ENCODE measurements at regions of chr14 and their contacts with region 1.

Region 1: GRCh38 chr14:59576332-59577294 is at the start of gene CCDC175:
- DNase-seq: peak; percentile 60 to 95 (median 87)
- ATAC-seq: peak; percentile 100
- H3K4me3 ChIP-seq: peak within 1 kb of the TSS; percentile 24 to 43
- H3K27ac ChIP-seq: no peak within 1 kb of the TSS
- H3K4me1 ChIP-seq: peaks cover 0 to 11% of the 10 kb centered on the region in 2 donors
- H3K27me3 ChIP-seq: peaks cover 0 to 26% of the 10 kb centered on the region in 2 donors
- CTCF ChIP-seq: peak; percentile 52 to 62
- polyA plus RNA-seq, gene CCDC175: 0.30 to 0.66 (median 0.41) TPM in 5 of 6 donors, not detected in the other

Region 2: DNA sequence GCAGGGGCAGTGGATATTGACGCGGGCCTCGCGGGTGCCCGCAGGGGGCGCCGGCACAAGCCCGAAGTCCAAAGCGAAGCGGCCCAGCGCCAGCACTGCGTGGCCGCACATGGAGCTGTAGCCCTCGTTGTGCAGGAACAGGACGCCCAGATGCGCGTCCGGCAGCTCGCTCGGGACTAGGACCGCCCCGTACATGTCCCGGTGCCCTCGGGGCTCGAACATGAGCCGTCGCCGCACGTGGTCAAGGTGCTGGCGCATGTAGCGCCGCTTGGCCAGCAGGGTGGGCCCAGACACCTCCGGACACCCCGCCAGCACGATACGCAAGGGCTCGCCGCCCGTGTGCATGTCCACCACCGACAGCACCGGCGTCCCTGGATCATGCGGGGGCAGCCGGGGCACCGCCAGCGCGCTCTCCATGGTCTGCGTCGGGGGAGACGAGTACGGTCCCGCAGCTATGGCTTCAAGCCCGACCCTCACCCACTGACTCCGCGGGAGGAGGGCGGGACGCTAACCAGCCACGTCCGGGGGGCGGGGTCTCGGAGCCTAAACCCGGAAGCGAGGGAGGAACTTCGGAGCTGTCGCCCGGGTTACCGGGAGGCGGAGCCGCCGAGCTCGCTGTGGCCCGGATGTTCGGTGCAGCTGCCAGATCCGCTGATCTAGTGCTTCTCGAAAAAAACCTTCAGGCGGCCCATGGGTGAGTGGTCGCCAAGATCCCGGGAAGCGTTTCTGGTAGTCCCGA is 92.5 kb before region 1 on chr14 and contains the starts of genes JKAMP and L3HYPDH:
- intact Hi-C with region 1: no loop called
- DNase-seq: peak; percentile 97 to 99 (median 98)
- ATAC-seq: peak; percentile 97
- H3K4me3 ChIP-seq: peak within 1 kb of the TSS; percentile 93 to 94
- H3K27ac ChIP-seq: peak within 1 kb of the TSS; percentile 93 to 96
- H3K4me1 ChIP-seq: peaks cover 22 to 71% of the 10 kb centered on the region in 2 donors
- H3K27me3 ChIP-seq: no peaks in the 10 kb centered on the region
- CTCF ChIP-seq: peak; percentile 57 to 64
- polyA plus RNA-seq, gene JKAMP: 75.5 to 90.1 (median 83.0) TPM
- polyA plus RNA-seq, gene L3HYPDH: 37.3 to 54.9 (median 47.6) TPM

Region 3: GRCh38 chr14:59507063-59507780 is 69.4 kb before region 1 on chr14:
- intact Hi-C with region 1: loop called in 1 of 2 experiments (anchors 10 kb)
- DNase-seq: peak in 1 of 4 donors; percentile 44
- ATAC-seq: peak; percentile 93
- H3K4me3 ChIP-seq: no peak overlapping the region
- H3K27ac ChIP-seq: no peak overlapping the region
- H3K4me1 ChIP-seq: no peaks in the 10 kb centered on the region
- H3K27me3 ChIP-seq: no peaks in the 10 kb centered on the region
- CTCF ChIP-seq: peak; percentile 60 to 65

Region 4: DNA sequence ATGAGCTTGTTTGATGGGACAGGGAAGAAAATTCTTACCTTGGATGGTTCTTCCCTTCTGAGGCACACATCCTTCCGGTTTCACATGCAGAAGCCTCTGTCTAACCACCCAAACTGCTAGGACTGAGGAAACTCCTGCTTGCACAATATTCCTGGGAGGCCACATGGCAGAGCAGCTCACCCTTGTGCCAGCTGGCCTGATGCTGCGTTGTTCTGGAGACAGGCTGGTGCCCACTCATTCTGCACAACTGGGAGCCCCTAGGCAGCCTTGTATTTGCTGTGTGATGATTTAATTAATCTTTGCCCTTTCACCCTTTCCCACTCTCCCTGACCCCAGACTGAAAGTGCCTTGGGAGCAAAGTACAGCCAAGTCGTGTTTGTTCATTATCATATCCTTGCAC is 163.2 kb after region 1 on chr14:
- intact Hi-C with region 1: no loop called
- DNase-seq: no peak
- ATAC-seq: no peak
- H3K4me3 ChIP-seq: no peak overlapping the region
- H3K27ac ChIP-seq: peak overlapping the region in 1 of 2 donors; percentile 6
- H3K4me1 ChIP-seq: peaks cover 0 to 5% of the 10 kb centered on the region in 2 donors
- H3K27me3 ChIP-seq: no peaks in the 10 kb centered on the region
- CTCF ChIP-seq: no peak